Activated T-helper 1 cell treated with anti-CD3 and anti-CD28 coated beads, Interleukin-12 subunit alpha, Interleukin-12 subunit beta, Interleukin-2, Interleukin-4 antibody, amounts not matched to agents 30 ng/mL and 10 ng/mL and 1 ng/mL, durations not matched to agents 14 hours and 24 hours and 36 hours (primary cell): ENCODE measurements at regions of chr9 and their contacts with region 1.

Region 1: GRCh38 chr9:87792831-87793288 is 66.9 kb downstream of the CTSL start:
- DNase-seq: peak; percentile 7
- H3K4me3 Mint-ChIP-seq: no peak overlapping the region
- H3K27ac Mint-ChIP-seq: no peak overlapping the region
- H3K4me1 Mint-ChIP-seq: peaks cover 36% of the 10 kb centered on the region
- H3K27me3 Mint-ChIP-seq: no peaks in the 10 kb centered on the region

Region 2: GRCh38 chr9:87502436-87503221 is 290.2 kb before region 1 on chr9:
- intact Hi-C with region 1: no loop called
- DNase-seq: no peak
- H3K4me3 Mint-ChIP-seq: no peak overlapping the region
- H3K27ac Mint-ChIP-seq: no peak overlapping the region
- H3K4me1 Mint-ChIP-seq: peaks cover 10% of the 10 kb centered on the region
- H3K27me3 Mint-ChIP-seq: peaks cover 28% of the 10 kb centered on the region

Region 3: DNA sequence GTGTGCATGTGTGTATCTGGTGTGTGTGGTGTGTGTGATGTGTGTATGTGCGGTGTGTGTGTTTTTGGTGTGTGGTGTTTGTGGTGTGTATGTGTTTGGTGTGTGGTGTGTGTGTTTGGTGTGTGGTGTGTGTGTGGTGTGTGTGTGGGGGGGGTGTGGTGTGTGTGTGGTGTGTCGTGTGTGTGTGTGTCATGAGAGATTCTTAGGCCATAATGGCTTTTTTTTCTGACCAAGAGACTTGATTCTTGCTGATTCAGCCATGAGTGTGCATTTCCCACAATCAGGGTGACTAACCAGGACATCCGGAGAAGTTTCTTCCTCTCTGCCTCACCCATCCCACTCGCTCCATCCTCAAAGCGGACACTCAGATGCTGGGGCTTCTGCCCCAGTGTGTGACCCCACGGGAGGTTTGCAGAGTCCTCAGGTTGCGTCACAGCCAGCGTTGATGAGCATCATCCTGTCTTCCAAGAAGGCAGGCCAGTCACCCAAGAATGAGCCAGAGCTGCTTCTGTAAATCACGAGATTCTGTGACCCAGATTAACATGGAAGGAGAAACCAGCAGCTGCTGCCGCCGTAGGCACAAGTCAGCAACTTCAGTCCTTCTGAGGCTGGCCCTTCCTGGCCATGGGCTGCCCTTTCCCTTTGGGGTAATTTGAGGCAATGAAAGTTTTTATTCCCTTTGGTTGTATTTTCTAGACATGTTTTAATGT is 79.4 kb before region 1 on chr9:
- intact Hi-C with region 1: loop called (anchors 5 kb)
- DNase-seq: peak; percentile 12
- H3K4me3 Mint-ChIP-seq: no peak overlapping the region
- H3K27ac Mint-ChIP-seq: no peak overlapping the region
- H3K4me1 Mint-ChIP-seq: peaks cover 34% of the 10 kb centered on the region
- H3K27me3 Mint-ChIP-seq: peaks cover 20% of the 10 kb centered on the region

Region 4: DNA sequence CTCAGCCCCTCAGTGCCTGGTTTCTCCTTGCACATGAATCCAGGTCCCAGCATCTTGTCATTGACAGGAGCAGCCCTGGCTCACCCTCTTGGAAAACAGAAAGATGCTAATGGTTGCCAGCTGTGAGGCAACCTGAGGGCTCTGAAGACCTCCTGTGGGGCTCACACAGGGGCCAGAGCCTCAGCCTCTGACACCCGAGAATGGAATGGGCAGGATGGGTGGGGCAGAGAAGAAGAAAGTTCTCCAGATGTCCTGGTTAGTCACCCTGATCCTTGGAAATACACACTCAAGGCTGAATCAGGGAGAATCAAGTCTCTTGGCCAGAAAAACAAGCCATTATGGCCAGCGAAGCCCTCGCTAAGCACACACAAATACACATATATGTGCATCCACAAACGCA is 57.5 kb after region 1 on chr9:
- intact Hi-C with region 1: no loop called
- DNase-seq: no peak
- H3K4me3 Mint-ChIP-seq: no peak overlapping the region
- H3K27ac Mint-ChIP-seq: no peak overlapping the region
- H3K4me1 Mint-ChIP-seq: no peaks in the 10 kb centered on the region
- H3K27me3 Mint-ChIP-seq: peaks cover 5% of the 10 kb centered on the region